ENCODE measurements at regions of chr1 and their contacts with region 1.

Region 1: DNA sequence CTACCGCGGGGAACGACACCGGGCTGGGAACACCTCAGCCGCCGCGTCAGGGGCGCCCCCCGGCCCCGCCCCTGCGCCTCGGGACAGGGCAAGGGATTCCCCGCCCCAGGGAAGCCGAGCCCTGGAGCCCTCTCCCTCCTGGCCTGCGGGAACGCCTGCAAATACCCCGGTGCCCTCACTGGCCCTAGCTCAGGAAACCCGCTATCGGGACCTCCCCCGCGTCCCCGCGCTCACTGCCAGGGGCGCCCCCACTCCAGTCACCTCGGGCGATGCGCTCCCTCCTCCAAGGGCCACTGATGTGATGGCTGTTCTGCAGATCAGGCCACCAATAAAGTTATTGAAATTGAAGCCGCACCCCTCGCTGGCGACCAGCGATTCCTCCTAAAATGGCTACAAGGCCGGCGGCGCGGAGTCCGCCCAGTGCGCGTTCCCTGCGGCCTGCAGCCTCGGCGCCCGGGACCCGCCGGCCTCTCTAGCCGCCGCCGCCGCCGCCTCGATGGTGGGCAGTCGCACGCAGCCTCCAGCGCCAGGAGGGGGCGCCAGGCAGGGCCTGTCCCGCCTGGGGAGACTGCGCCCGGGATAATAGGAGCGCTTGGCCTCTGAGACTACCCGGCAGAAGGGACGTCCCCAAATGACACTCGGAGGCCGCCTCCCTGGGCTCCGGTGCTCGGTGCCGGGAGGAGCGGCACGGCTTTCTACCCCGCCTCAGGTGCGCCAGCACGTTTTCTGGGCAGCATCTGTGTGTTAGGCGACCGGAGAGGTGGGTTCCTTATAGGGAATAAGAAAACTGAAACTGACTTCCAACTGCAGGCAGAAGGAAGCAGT is at the start of gene PRKAB2:
- DNase-seq: peak; percentile 95
- H3K4me3 Mint-ChIP-seq: peak within 1 kb of the TSS; percentile 99
- H3K27ac Mint-ChIP-seq: peak within 1 kb of the TSS; percentile 99
- H3K4me1 Mint-ChIP-seq: peaks cover 37% of the 10 kb centered on the region
- H3K27me3 Mint-ChIP-seq: no peaks in the 10 kb centered on the region
- total RNA-seq, gene PRKAB2: 7.0 to 7.4 TPM

Region 2: GRCh38 chr1:147129116-147129873 is 43.1 kb before region 1 on chr1:
- CTCF ChIA-PET with region 1: no interaction called
- POLR2A ChIA-PET with region 1: no interaction called
- intact Hi-C with region 1: no loop called
- DNase-seq: no peak
- H3K4me3 Mint-ChIP-seq: no peak overlapping the region
- H3K27ac Mint-ChIP-seq: no peak overlapping the region
- H3K4me1 Mint-ChIP-seq: no peaks in the 10 kb centered on the region
- H3K27me3 Mint-ChIP-seq: peaks cover 12% of the 10 kb centered on the region

Region 3: DNA sequence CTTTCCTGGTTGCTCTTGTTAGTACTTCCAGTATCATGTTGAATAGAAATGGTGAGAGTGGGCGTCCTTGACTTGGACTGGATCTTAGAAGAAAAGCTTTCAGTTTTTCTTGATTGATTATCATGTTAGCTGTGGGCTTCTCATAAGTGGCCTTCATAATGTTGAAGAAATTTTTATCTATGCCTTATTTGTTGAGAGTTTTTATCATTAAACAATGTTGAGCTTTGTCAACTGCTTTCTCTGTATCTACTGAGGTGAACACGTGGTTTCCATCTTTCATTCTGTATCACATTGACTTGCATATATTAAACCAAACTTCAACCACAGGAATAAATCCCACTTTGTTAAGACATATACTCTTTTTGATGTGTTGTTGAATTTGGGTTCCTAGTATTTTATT is 29.5 kb before region 1 on chr1:
- CTCF ChIA-PET with region 1: no interaction called
- POLR2A ChIA-PET with region 1: no interaction called
- intact Hi-C with region 1: no loop called
- DNase-seq: no peak
- H3K4me3 Mint-ChIP-seq: no peak overlapping the region
- H3K27ac Mint-ChIP-seq: no peak overlapping the region
- H3K4me1 Mint-ChIP-seq: no peaks in the 10 kb centered on the region
- H3K27me3 Mint-ChIP-seq: peaks cover 2% of the 10 kb centered on the region

Region 4: DNA sequence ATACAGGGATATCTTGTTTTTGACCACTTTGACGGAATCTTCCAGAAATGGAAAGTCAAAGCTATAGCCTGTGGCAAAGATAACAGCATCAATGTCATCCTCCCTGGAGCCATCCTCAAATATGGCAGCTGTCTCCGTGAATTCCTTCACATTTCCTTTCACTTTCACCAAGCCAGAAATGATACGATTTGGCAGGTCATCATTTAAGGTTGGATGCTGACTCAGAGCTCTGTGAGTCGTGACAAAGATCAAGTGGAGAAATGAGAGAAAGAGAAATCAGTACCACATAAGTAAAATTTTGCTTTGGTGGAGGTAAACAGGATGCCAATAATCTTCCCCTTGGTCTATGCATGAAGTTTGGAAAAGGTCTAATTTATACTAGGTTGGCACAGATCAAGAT is 28.9 kb after region 1 on chr1:
- CTCF ChIA-PET with region 1: no interaction called
- POLR2A ChIA-PET with region 1: no interaction called
- intact Hi-C with region 1: no loop called
- DNase-seq: no peak
- H3K4me3 Mint-ChIP-seq: no peak overlapping the region
- H3K27ac Mint-ChIP-seq: no peak overlapping the region
- H3K4me1 Mint-ChIP-seq: peaks cover 8% of the 10 kb centered on the region
- H3K27me3 Mint-ChIP-seq: no peaks in the 10 kb centered on the region

Region 5: GRCh38 chr1:147225193-147225730 is 52.9 kb after region 1 on chr1 and contains the start of gene FMO5:
- CTCF ChIA-PET with region 1: interaction called, 4 read pairs
- POLR2A ChIA-PET with region 1: interaction called, 3 read pairs
- intact Hi-C with region 1: loop called (anchors 5 kb)
- DNase-seq: peak; percentile 69
- H3K4me3 Mint-ChIP-seq: peak within 1 kb of the TSS; percentile 82
- H3K27ac Mint-ChIP-seq: peak within 1 kb of the TSS; percentile 28
- H3K4me1 Mint-ChIP-seq: peaks cover 10% of the 10 kb centered on the region
- H3K27me3 Mint-ChIP-seq: no peaks in the 10 kb centered on the region
- total RNA-seq, gene FMO5: 0.27 to 0.33 TPM

Region 6: DNA sequence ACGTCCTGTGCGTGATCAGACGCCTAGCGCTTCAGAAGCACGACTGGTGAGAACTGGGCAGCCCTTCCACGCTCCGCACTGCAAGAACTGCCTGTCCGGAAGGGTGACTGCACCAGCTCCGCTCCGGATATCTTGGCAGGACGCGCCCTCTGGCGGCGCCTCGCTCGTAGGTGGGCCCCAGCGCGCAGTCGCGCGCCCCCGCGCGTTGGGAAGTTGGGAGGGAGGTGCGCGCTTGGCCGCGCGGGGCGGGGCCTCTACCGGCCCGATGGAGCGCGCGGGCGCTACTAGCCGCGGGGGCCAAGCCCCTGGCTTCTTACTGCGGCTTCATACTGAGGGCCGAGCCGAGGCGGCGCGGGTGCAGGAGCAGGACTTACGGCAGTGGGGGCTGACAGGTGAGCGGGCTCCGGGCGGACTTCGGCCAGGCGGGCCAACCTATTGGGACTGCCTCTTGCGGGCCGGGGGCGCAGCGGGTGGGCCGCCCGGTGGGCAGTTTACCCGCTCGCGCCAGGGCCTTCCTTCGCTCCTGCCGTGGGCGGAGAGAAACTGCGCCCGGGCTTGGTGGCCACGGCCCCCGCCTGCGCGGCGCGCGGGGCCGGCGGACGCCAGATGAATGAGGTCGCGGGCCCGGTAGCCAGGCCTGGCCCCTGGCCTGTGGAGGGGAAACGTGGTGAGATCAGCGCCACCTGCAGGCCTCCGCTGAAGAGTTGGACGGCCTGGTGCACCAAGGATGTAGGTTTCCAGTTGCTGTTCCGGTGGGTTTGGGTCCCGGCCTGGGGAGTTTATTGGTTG is 70.3 kb after region 1 on chr1 and contains the start of gene CHD1L:
- CTCF ChIA-PET with region 1: interaction called, 69 read pairs
- POLR2A ChIA-PET with region 1: interaction called, 15 read pairs
- intact Hi-C with region 1: loop called (anchors 1 kb)
- DNase-seq: peak; percentile 96
- H3K4me3 Mint-ChIP-seq: peak within 1 kb of the TSS; percentile 90
- H3K27ac Mint-ChIP-seq: peak within 1 kb of the TSS; percentile 77
- H3K4me1 Mint-ChIP-seq: peaks cover 36% of the 10 kb centered on the region
- H3K27me3 Mint-ChIP-seq: no peaks in the 10 kb centered on the region
- total RNA-seq, gene CHD1L: 71.2 to 72.0 TPM